SK-N-SH (cell line): ENCODE measurements at regions of chr11 and their contacts with region 1.

Region 1: GRCh38 chr11:10933455-10934292 is 75.8 kb upstream of the ZBED5 start:
- DNase-seq: peak; percentile 78
- H3K4me3 ChIP-seq: peak overlapping the region; percentile 44 to 54
- H3K27ac ChIP-seq: peak overlapping the region; percentile 30 to 69; a peak in 1 of 4 replicates
- H3K4me1 ChIP-seq: peaks cover 0 to 9% of the 10 kb centered on the region in 2 experiments; a peak in 1 of 4 replicates
- H3K27me3 ChIP-seq: no peaks in the 10 kb centered on the region
- CTCF ChIP-seq: peak; percentile 94
- EP300 ChIP-seq: no peak
- RAD21 ChIP-seq: peak; percentile 99

Region 2: GRCh38 chr11:10808553-10809372 is 124.9 kb before region 1 on chr11 and contains the start of gene EIF4G2:
- CTCF ChIA-PET with region 1: interaction called, 4 read pairs
- POLR2A ChIA-PET with region 1: interaction called, 26 read pairs
- DNase-seq: peak; percentile 97
- H3K4me3 ChIP-seq: peak within 1 kb of the TSS; percentile 75 to 93
- H3K27ac ChIP-seq: peak within 1 kb of the TSS; percentile 95 to 98
- H3K4me1 ChIP-seq: peaks cover 17 to 27% of the 10 kb centered on the region in 2 experiments
- H3K27me3 ChIP-seq: no peaks in the 10 kb centered on the region
- CTCF ChIP-seq: no peak
- EP300 ChIP-seq: no peak; a peak in 1 of 4 replicates
- RAD21 ChIP-seq: no peak; the same call in 1 of the 2 replicates
- polyA plus RNA-seq, gene EIF4G2: 298 and 394 TPM in 2 replicates

Region 3: DNA sequence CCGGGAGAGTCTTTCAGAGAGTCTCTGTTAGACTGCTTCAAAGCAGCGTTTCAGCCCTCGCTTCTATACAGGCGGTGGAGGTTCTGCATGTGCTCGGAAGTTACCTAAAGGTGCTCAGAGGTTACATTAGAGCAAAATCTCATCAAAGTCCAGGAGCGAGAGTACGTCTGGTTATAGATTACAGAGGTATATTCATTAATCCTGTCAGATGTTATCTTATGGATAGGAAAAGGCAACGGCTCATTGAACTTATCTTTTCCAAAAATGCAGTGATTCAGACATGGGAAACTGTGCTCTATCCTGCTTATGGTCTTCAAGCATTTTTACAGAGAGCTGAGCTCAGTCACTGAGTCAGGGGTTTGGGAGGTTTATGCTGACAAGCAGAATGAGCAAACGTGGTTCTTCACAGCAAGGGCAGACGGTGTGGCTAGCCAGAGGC is 66.8 kb before region 1 on chr11:
- CTCF ChIA-PET with region 1: no interaction called
- POLR2A ChIA-PET with region 1: no interaction called
- DNase-seq: peak; percentile 4
- H3K4me3 ChIP-seq: no peak overlapping the region
- H3K27ac ChIP-seq: peak overlapping the region in 1 of 2 experiments; percentile 27; a peak in 1 of 4 replicates
- H3K4me1 ChIP-seq: peaks cover 5 to 6% of the 10 kb centered on the region in 2 experiments; a peak in 3 of 4 replicates
- H3K27me3 ChIP-seq: no peaks in the 10 kb centered on the region
- CTCF ChIP-seq: no peak
- EP300 ChIP-seq: no peak
- RAD21 ChIP-seq: no peak

Region 4: DNA sequence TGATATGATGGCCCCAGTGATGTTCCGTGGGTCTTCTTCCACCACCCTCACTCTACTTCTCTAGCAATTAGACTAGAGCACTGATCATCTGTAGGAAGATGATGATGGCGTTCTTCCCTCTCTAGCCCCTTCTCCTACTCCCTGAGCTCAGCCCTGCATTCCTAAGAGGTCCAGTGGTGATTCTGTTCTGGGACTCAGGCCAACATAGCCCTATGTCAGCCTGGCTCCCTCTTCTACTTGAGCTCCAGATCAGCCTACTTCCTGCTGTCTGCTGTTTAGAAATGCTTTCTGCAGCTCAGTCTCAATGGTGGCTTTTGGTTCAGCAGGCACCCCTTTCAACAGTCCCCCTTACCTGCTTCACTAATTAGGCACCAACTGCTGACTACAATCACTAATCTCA is 10.3 kb after region 1 on chr11:
- CTCF ChIA-PET with region 1: interaction called, 14 read pairs
- POLR2A ChIA-PET with region 1: interaction called, 4 read pairs
- DNase-seq: no peak
- H3K4me3 ChIP-seq: no peak overlapping the region
- H3K27ac ChIP-seq: no peak overlapping the region
- H3K4me1 ChIP-seq: no peaks in the 10 kb centered on the region; a peak in 1 of 4 replicates
- H3K27me3 ChIP-seq: no peaks in the 10 kb centered on the region
- CTCF ChIP-seq: no peak
- EP300 ChIP-seq: no peak
- RAD21 ChIP-seq: no peak

Region 5: DNA sequence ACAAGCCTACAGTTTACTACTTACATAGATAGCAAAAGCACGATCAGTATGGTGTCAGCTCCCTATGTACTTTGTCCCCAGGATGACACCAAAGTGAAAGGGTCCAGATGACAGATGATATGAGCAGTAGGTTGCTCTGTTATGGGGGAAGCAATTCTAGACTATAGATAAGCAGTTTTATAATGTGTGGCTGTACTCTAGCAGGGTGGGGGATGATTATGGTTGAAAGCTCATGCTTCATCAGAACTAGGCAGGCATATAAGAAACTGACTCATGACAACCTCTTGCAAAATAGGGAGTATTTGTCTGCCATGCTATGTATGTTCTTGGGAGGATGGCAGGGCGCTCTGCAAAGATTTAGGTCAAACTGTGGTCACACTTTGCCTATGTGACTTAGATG is 82.4 kb after region 1 on chr11:
- CTCF ChIA-PET with region 1: interaction called, 120 read pairs
- POLR2A ChIA-PET with region 1: interaction called, 5 read pairs
- DNase-seq: no peak
- H3K4me3 ChIP-seq: no peak overlapping the region
- H3K27ac ChIP-seq: no peak overlapping the region
- H3K4me1 ChIP-seq: peaks cover 0 to 5% of the 10 kb centered on the region in 2 experiments; a peak in 2 of 4 replicates
- H3K27me3 ChIP-seq: no peaks in the 10 kb centered on the region
- CTCF ChIP-seq: no peak
- EP300 ChIP-seq: no peak
- RAD21 ChIP-seq: no peak

Region 6: GRCh38 chr11:11028017-11028692 is 94.5 kb after region 1 on chr11:
- CTCF ChIA-PET with region 1: interaction called, 120 read pairs
- POLR2A ChIA-PET with region 1: no interaction called
- DNase-seq: peak; percentile 27
- H3K4me3 ChIP-seq: peak overlapping the region in 1 of 2 experiments; percentile 50; a peak in 1 of 4 replicates
- H3K27ac ChIP-seq: no peak overlapping the region
- H3K4me1 ChIP-seq: peaks cover 0 to 7% of the 10 kb centered on the region in 2 experiments; a peak in 3 of 4 replicates
- H3K27me3 ChIP-seq: no peaks in the 10 kb centered on the region
- CTCF ChIP-seq: no peak
- EP300 ChIP-seq: no peak
- RAD21 ChIP-seq: peak; percentile 62